CD4-positive, alpha-beta memory T cell (primary cell): ENCODE measurements at regions of chr16 and their contacts with region 1.

Region 1: GRCh38 chr16:28140788-28141618 is 70.8 kb downstream of the XPO6 start:
- DNase-seq: peak; percentile 87 to 96 (median 93)
- H3K4me3 ChIP-seq: peak overlapping the region; percentile 19 to 44
- H3K4me3 Mint-ChIP-seq: peak overlapping the region; percentile 76 to 94 (median 86)
- H3K27ac ChIP-seq: peak overlapping the region; percentile 69
- H3K27ac Mint-ChIP-seq: peak overlapping the region; percentile 89 to 100 (median 99)
- H3K4me1 ChIP-seq: peaks cover 97% of the 10 kb centered on the region
- H3K4me1 Mint-ChIP-seq: peaks cover 68 to 92% (median 81%) of the 10 kb centered on the region in 4 donors
- H3K27me3 ChIP-seq: no peaks in the 10 kb centered on the region
- H3K27me3 Mint-ChIP-seq: no peaks in the 10 kb centered on the region

Region 2: GRCh38 chr16:28155293-28155692 is 14.3 kb after region 1 on chr16:
- CTCF ChIA-PET with region 1: interaction called, 8 read pairs
- POLR2A ChIA-PET with region 1: interaction called, 37 read pairs
- intact Hi-C with region 1: no loop called
- DNase-seq: no peak
- H3K4me3 ChIP-seq: no peak overlapping the region
- H3K4me3 Mint-ChIP-seq: peak overlapping the region in 2 of 8 donors; percentile 53 to 63
- H3K27ac ChIP-seq: no peak overlapping the region
- H3K27ac Mint-ChIP-seq: peak overlapping the region; percentile 42 to 90 (median 82)
- H3K4me1 ChIP-seq: peaks cover 37% of the 10 kb centered on the region
- H3K4me1 Mint-ChIP-seq: peaks cover 44 to 65% (median 55%) of the 10 kb centered on the region in 4 donors
- H3K27me3 ChIP-seq: no peaks in the 10 kb centered on the region
- H3K27me3 Mint-ChIP-seq: no peaks in the 10 kb centered on the region

Region 3: GRCh38 chr16:28166394-28167208 is 25.6 kb after region 1 on chr16:
- CTCF ChIA-PET with region 1: interaction called, 7 read pairs
- POLR2A ChIA-PET with region 1: interaction called, 18 read pairs
- intact Hi-C with region 1: loop called (anchors 1 kb)
- DNase-seq: no peak
- H3K4me3 ChIP-seq: no peak overlapping the region
- H3K4me3 Mint-ChIP-seq: peak overlapping the region in 5 of 8 donors; percentile 6 to 75 (median 51)
- H3K27ac ChIP-seq: no peak overlapping the region
- H3K27ac Mint-ChIP-seq: peak overlapping the region; percentile 45 to 93 (median 72)
- H3K4me1 ChIP-seq: peaks cover 86% of the 10 kb centered on the region
- H3K4me1 Mint-ChIP-seq: peaks cover 51 to 85% (median 72%) of the 10 kb centered on the region in 4 donors
- H3K27me3 ChIP-seq: no peaks in the 10 kb centered on the region
- H3K27me3 Mint-ChIP-seq: no peaks in the 10 kb centered on the region

Region 4: DNA sequence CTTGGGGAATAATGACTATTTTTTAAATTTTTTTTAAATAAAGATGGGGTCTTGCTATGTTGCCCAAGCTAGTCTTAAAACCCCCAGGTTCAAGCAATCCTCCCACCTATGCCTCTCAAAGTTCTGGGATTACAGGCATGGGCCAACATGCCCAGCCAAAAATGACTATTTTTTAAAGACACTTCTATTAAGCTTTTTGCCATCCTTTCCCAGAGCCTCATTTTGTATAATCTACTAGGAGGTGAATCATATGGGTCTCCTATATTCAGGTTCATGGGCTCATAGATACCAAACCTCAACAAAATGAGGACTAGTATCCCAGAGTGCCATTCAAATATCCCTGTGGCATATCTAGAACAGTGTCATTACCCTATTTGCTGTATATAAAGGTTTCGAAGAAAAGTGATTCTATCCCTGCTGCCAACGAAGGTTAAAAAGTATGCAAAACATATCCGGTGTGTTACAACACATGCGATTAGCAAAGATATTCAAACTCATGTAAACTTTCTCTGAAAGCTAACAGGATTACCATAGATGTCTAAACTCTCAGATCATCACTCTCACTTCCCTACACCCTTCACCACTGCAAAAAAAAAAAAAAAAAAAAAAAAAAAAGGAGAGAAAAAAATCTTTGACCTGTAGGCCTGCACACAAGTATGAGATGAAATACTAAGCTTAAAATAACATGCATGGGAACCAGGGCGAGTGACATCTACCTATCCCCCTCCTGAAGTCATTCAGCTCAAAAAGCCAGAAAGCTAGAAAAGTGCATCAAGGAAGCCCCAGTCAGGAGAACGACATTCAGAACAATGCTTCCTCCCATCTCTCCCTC is 47.3 kb after region 1 on chr16:
- CTCF ChIA-PET with region 1: interaction called, 19 read pairs
- POLR2A ChIA-PET with region 1: interaction called, 85 read pairs
- intact Hi-C with region 1: loop called (anchors 1 kb)
- DNase-seq: peak in 1 of 5 donors; percentile 32
- H3K4me3 ChIP-seq: no peak overlapping the region
- H3K4me3 Mint-ChIP-seq: peak overlapping the region; percentile 67 to 89 (median 80)
- H3K27ac ChIP-seq: peak overlapping the region; percentile 50
- H3K27ac Mint-ChIP-seq: peak overlapping the region; percentile 91 to 98 (median 93)
- H3K4me1 ChIP-seq: peaks cover 97% of the 10 kb centered on the region
- H3K4me1 Mint-ChIP-seq: peaks cover 75 to 97% (median 87%) of the 10 kb centered on the region in 4 donors
- H3K27me3 ChIP-seq: no peaks in the 10 kb centered on the region
- H3K27me3 Mint-ChIP-seq: no peaks in the 10 kb centered on the region

Region 5: GRCh38 chr16:28193530-28194423 is 52.8 kb after region 1 on chr16:
- CTCF ChIA-PET with region 1: interaction called, 10 read pairs
- POLR2A ChIA-PET with region 1: interaction called, 85 read pairs
- intact Hi-C with region 1: loop called (anchors 1 kb)
- DNase-seq: peak in 2 of 5 donors; percentile 42 to 80
- H3K4me3 ChIP-seq: peak overlapping the region; percentile 18 to 53
- H3K4me3 Mint-ChIP-seq: peak overlapping the region; percentile 76 to 91 (median 84)
- H3K27ac ChIP-seq: peak overlapping the region; percentile 88
- H3K27ac Mint-ChIP-seq: peak overlapping the region; percentile 94 to 99 (median 98)
- H3K4me1 ChIP-seq: peaks cover 87% of the 10 kb centered on the region
- H3K4me1 Mint-ChIP-seq: peaks cover 62 to 85% (median 75%) of the 10 kb centered on the region in 4 donors
- H3K27me3 ChIP-seq: no peaks in the 10 kb centered on the region
- H3K27me3 Mint-ChIP-seq: no peaks in the 10 kb centered on the region

Region 6: DNA sequence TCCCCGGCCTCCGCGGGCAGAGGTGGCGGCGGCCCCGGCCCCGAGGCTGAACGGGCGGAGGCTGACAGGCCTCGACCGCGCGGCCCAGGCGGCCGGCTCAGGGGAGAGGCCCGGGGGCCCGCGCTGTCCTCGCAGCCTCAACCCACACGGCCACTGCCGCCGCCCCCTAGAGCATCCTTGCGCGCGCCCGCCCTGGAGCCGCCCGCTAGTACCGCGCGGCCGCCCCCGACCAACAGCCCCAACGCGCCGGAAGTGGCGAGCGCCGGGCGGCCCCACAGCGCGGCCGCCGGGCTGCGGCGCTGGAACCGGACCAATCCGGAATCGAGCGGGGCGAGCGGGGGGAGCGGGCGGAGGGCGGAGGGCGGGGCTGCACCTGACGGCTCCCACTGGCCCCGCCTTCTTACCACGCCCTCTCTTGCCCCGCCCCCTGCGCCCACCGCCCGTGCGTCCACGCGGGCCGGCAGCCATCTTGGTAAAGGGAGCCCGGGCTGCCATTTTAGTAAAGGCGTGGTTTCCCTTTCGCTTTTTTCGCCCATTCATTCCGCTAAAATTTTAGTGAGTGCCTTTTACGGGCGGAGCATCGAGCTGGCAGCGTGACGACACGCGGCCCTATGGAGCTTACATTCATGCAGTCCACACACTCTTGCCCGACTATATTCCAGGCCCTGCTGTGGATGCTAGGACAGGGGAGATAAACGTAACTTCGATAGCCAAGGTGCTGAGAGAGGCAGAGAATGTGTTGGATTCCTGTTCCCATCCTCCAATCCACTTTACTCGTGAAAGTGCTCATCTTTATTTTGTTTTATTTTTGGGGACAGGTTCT is 70.9 kb after region 1 on chr16 and contains the start of gene XPO6:
- CTCF ChIA-PET with region 1: interaction called, 569 read pairs
- POLR2A ChIA-PET with region 1: interaction called, 301 read pairs
- intact Hi-C with region 1: loop called (anchors 1 kb)
- DNase-seq: peak; percentile 97 to 98 (median 97)
- H3K4me3 ChIP-seq: peak within 1 kb of the TSS; percentile 72 to 92
- H3K4me3 Mint-ChIP-seq: peak within 1 kb of the TSS; percentile 87 to 96 (median 92)
- H3K27ac ChIP-seq: peak within 1 kb of the TSS; percentile 71
- H3K27ac Mint-ChIP-seq: peak within 1 kb of the TSS; percentile 83 to 98 (median 92)
- H3K4me1 ChIP-seq: peaks cover 41% of the 10 kb centered on the region
- H3K4me1 Mint-ChIP-seq: peaks cover 17 to 44% (median 30%) of the 10 kb centered on the region in 4 donors
- H3K27me3 ChIP-seq: no peaks in the 10 kb centered on the region
- H3K27me3 Mint-ChIP-seq: no peaks in the 10 kb centered on the region
- total RNA-seq, gene XPO6: 347 to 350 TPM

Region 7: GRCh38 chr16:28309811-28310311 is 168.9 kb after region 1 on chr16:
- CTCF ChIA-PET with region 1: no interaction called
- POLR2A ChIA-PET with region 1: interaction called, 5 read pairs
- intact Hi-C with region 1: loop called (anchors 2 kb)
- DNase-seq: peak; percentile 85 to 95 (median 88)
- H3K4me3 ChIP-seq: peak overlapping the region in 1 of 2 donors; percentile 16
- H3K4me3 Mint-ChIP-seq: peak overlapping the region; percentile 8 to 83 (median 75)
- H3K27ac ChIP-seq: peak overlapping the region; percentile 72
- H3K27ac Mint-ChIP-seq: peak overlapping the region; percentile 91 to 99 (median 96)
- H3K4me1 ChIP-seq: peaks cover 53% of the 10 kb centered on the region
- H3K4me1 Mint-ChIP-seq: peaks cover 47 to 70% (median 55%) of the 10 kb centered on the region in 4 donors
- H3K27me3 ChIP-seq: no peaks in the 10 kb centered on the region
- H3K27me3 Mint-ChIP-seq: no peaks in the 10 kb centered on the region